Common myeloid progenitor, CD34-positive (primary cell): ENCODE measurements at regions of chr12 and their contacts with region 1.

Region 1: DNA sequence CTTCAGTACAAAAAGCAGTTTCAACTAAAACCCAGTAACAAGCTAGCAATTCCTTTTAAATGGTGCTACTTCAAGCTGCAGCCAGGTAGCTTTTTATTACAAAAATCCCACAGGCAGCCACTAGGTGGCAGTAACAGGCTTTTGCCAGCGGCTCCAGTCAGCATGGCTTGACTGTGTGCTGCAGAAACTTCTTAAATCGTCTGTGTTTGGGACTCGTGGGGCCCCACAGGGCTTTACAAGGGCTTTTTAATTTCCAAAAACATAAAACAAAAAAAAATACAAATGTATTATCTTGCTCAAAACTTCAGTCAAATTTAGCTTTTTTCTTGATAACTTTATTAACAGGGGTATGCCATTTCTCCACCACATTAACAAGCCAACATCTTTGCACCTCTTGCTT is 3.6 kb upstream of the CLEC4E start:
- DNase-seq: peak; percentile 67 to 84 (median 79)
- H3K4me3 ChIP-seq: peak overlapping the region in 1 of 7 experiments; percentile 45
- H3K27ac ChIP-seq: no peak overlapping the region
- H3K4me1 ChIP-seq: peaks cover 0 to 9% (median 0%) of the 10 kb centered on the region in 4 experiments
- H3K27me3 ChIP-seq: peaks cover 0 to 3% (median 0%) of the 10 kb centered on the region in 5 experiments

Region 2: GRCh38 chr12:8483079-8483478 is 61.2 kb before region 1 on chr12:
- CTCF ChIA-PET with region 1: no interaction called
- POLR2A ChIA-PET with region 1: no interaction called
- DNase-seq: no peak
- H3K4me3 ChIP-seq: no peak overlapping the region
- H3K27ac ChIP-seq: no peak overlapping the region
- H3K4me1 ChIP-seq: no peaks in the 10 kb centered on the region
- H3K27me3 ChIP-seq: peaks cover 0 to 7% (median 0%) of the 10 kb centered on the region in 5 experiments

Region 3: DNA sequence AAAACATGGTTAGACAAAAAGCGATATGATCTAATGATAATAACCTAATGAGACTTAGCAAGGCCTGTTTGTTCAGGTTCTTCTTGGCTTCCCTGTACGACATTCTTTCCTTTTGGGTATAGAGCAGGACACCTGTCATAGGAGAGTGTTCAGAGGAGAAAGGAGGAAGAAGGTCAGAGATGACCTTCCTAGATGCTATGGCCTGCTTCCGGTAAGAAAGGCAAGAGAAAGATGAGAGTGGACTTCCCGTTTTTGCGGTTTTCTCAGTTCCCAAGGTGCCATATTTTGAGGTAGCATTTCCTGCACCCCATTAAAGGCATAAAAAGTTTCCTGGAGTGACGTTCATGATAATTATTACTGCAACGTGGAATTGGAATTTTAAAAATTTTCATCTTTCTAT is 12.2 kb before region 1 on chr12:
- CTCF ChIA-PET with region 1: interaction called, 14 read pairs
- POLR2A ChIA-PET with region 1: no interaction called
- DNase-seq: no peak
- H3K4me3 ChIP-seq: no peak overlapping the region
- H3K27ac ChIP-seq: no peak overlapping the region
- H3K4me1 ChIP-seq: no peaks in the 10 kb centered on the region
- H3K27me3 ChIP-seq: peaks cover 0 to 5% (median 0%) of the 10 kb centered on the region in 5 experiments

Region 4: GRCh38 chr12:8577879-8578278 is 33.6 kb after region 1 on chr12:
- CTCF ChIA-PET with region 1: interaction called, 10 read pairs
- POLR2A ChIA-PET with region 1: no interaction called
- DNase-seq: no peak
- H3K4me3 ChIP-seq: no peak overlapping the region
- H3K27ac ChIP-seq: no peak overlapping the region
- H3K4me1 ChIP-seq: peaks cover 0 to 3% (median 0%) of the 10 kb centered on the region in 4 experiments
- H3K27me3 ChIP-seq: no peaks in the 10 kb centered on the region

Region 5: DNA sequence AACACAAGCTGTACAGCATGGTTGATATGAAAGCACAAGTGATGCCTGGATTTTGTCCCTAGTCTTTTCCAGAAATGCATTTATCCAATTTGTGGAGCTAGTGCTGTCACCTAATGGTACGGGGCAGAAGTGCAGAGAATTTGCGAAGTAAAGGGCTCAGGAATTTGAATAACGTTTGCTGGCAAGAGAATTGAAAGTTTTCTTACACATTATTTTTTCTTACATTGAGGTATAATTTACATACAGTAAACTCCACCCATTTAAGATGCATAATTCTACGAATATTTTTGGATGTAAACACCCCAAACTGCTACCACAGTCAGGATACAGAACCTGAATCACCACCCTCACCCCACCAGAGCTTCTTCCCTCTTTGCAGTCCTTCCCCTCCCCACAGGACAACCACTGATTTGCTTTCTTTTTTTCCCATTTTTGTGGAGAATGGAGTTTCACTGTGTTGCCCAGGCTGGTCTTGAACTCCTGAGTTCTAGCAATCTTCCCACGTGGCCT is 64.8 kb after region 1 on chr12:
- CTCF ChIA-PET with region 1: interaction called, 10 read pairs
- POLR2A ChIA-PET with region 1: no interaction called
- DNase-seq: peak; percentile 31 to 46 (median 42)
- H3K4me3 ChIP-seq: peak overlapping the region in 5 of 7 experiments; percentile 30 to 63 (median 38)
- H3K27ac ChIP-seq: no peak overlapping the region
- H3K4me1 ChIP-seq: peaks cover 4 to 9% (median 6%) of the 10 kb centered on the region in 4 experiments
- H3K27me3 ChIP-seq: no peaks in the 10 kb centered on the region

Region 6: GRCh38 chr12:9049520-9050133 is 505.3 kb after region 1 on chr12:
- CTCF ChIA-PET with region 1: interaction called, 11 read pairs
- POLR2A ChIA-PET with region 1: no interaction called
- DNase-seq: peak; percentile 66 to 89 (median 82)
- H3K4me3 ChIP-seq: no peak overlapping the region
- H3K27ac ChIP-seq: no peak overlapping the region
- H3K4me1 ChIP-seq: peaks cover 0 to 2% (median 0%) of the 10 kb centered on the region in 4 experiments
- H3K27me3 ChIP-seq: no peaks in the 10 kb centered on the region